Panc1 (cell line): ENCODE measurements at regions of chr11 and their contacts with region 1.

Region 1: DNA sequence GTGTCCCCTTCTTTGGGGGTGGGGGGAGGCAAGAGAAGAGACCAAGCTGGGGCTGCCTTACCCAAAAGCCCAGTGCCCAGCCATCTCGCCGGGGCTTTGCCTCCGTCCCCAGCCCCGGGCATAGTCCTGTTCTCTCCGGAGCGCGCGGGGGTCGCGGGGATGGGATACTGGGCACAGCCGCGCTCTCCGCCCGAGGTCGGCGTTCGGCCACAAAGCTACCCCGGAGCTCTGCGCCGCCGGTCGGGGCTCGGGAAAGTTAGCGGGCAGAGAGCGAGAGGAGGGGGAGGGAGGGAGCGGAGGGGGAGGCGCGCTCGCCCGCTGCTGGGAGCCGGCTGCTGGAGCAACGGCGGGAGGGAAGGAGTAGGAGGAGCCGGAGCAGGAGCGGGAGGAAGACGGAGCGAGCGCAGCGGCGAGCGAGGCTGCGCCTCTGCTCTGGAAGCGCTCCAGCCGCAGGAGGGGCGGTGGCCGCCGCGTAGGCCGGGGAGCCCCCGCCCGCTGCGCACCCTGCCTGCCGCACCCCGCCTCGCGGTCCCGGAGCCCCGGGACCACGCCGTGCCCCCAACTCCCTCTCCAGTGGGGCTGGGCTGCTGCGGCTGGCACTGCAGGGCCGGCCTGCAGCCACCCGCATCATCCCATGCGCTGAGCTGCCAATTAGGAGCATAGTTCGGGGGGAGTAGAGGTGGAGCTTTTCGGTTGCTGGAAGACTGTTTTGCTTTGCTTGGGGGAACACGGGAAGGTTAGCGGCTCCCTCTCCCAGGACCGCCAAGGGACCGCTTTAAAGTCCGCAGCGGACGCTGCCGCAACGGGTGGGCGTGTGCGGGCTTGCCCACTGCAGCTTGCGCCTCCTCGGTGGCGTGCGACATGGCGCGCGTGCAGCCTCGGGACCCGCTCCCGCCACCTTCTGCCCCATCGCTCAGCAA is at the start of gene SCN4B:
- DNase-seq: no peak
- ATAC-seq: peak; percentile 82
- H3K4me3 ChIP-seq: peak within 1 kb of the TSS; percentile 49 to 50
- H3K27ac ChIP-seq: no peak within 1 kb of the TSS
- H3K4me1 ChIP-seq: peaks cover 4% of the 10 kb centered on the region
- H3K27me3 ChIP-seq: peaks cover 31% of the 10 kb centered on the region
- CTCF ChIP-seq: no peak
- total RNA-seq, gene SCN4B: 0.33 TPM

Region 2: GRCh38 chr11:118171269-118172062 is 18.7 kb after region 1 on chr11:
- CTCF ChIA-PET with region 1: interaction called, 14 read pairs
- POLR2A ChIA-PET with region 1: no interaction called
- in situ Hi-C with region 1: no loop called
- intact Hi-C with region 1: loop called (anchors 2 kb)
- DNase-seq: peak; percentile 30
- ATAC-seq: peak; percentile 90
- H3K4me3 ChIP-seq: no peak overlapping the region
- H3K27ac ChIP-seq: no peak overlapping the region
- H3K4me1 ChIP-seq: no peaks in the 10 kb centered on the region
- H3K27me3 ChIP-seq: peaks cover 10% of the 10 kb centered on the region
- CTCF ChIP-seq: peak; percentile 99

Region 3: DNA sequence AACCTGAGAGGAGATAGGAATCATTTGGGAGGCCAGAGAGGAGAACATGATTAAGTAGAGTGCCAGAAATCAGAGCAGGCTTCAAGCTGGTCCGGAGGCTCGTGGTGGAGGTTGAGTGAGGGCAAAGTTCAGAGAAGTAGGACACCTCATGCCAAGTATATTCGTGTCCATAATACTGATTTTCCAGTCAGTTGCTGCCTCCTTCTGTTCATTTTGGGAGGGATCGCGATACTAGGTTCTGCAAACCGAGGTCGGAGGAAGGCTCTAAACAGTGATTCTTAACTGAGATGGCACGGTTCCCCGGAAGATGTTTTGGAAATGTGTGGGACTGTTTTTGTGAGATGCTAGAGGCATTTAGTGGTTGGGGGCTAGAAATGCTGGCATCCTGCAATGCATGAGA is 138.1 kb after region 1 on chr11:
- CTCF ChIA-PET with region 1: no interaction called
- POLR2A ChIA-PET with region 1: no interaction called
- in situ Hi-C with region 1: no loop called
- intact Hi-C with region 1: loop called (anchors 5 kb)
- DNase-seq: no peak
- ATAC-seq: peak; percentile 83
- H3K4me3 ChIP-seq: no peak overlapping the region
- H3K27ac ChIP-seq: no peak overlapping the region
- H3K4me1 ChIP-seq: no peaks in the 10 kb centered on the region; the same call in 1 of the 2 replicates
- H3K27me3 ChIP-seq: peaks cover 14% of the 10 kb centered on the region
- CTCF ChIP-seq: peak; percentile 72